GM12878 (cell line): ENCODE measurements at regions of chr5 and their contacts with region 1.

Region 1: GRCh38 chr5:23139338-23140171 is 286.4 kb upstream of the CDH12 start:
- DNase-seq: no peak
- ATAC-seq: peak; percentile 86
- H3K4me3 ChIP-seq: no peak overlapping the region
- H3K27ac ChIP-seq: no peak overlapping the region
- H3K4me1 ChIP-seq: no peaks in the 10 kb centered on the region
- H3K27me3 ChIP-seq: no peaks in the 10 kb centered on the region
- CTCF ChIP-seq: peak; percentile 41 to 67 (median 51); a peak in 5 of 6 replicates
- EP300 ChIP-seq: no peak
- POLR2A ChIP-seq: no peak
- RAD21 ChIP-seq: peak; percentile 44

Region 2: GRCh38 chr5:22889718-22890117 is 249.8 kb before region 1 on chr5:
- CTCF ChIA-PET with region 1: interaction called, 4 read pairs
- POLR2A ChIA-PET with region 1: no interaction called
- RAD21 ChIA-PET with region 1: no interaction called
- SMC1A ChIA-PET with region 1: interaction called, 4 read pairs
- in situ Hi-C with region 1: no loop called
- intact Hi-C with region 1: loop called (anchors 1 kb)
- DNase-seq: no peak
- ATAC-seq: peak; percentile 69
- H3K4me3 ChIP-seq: no peak overlapping the region
- H3K27ac ChIP-seq: no peak overlapping the region
- H3K4me1 ChIP-seq: no peaks in the 10 kb centered on the region
- H3K27me3 ChIP-seq: no peaks in the 10 kb centered on the region
- CTCF ChIP-seq: peak in 2 of 3 experiments; percentile 9 to 50; a peak in 1 of 6 replicates
- EP300 ChIP-seq: no peak
- POLR2A ChIP-seq: no peak
- RAD21 ChIP-seq: 0 out of 2 replicates have a peak, but pooled peaks have one; percentile 15

Region 3: DNA sequence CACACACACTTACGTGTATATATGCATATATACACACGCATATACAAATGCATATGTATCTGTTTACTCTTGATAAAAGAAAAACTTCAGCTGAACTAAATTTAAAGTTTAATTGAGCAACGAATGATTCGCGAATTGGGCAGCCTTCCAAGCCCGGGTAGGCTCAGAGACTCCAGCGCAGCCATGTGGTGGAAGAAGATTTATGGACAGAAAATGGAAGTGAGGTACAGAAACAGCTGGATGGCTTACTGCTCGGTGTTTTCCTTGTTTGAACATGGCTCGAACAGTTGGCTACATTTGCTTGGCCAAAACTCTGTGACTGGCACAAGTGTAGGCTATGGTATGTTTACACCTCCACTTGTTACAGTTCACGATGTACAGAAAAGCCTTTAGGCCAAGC is 128.6 kb after region 1 on chr5:
- CTCF ChIA-PET with region 1: no interaction called
- POLR2A ChIA-PET with region 1: no interaction called
- RAD21 ChIA-PET with region 1: no interaction called
- SMC1A ChIA-PET with region 1: no interaction called
- in situ Hi-C with region 1: no loop called
- intact Hi-C with region 1: no loop called
- DNase-seq: no peak
- ATAC-seq: no peak
- H3K4me3 ChIP-seq: no peak overlapping the region
- H3K27ac ChIP-seq: no peak overlapping the region
- H3K4me1 ChIP-seq: no peaks in the 10 kb centered on the region
- H3K27me3 ChIP-seq: no peaks in the 10 kb centered on the region
- CTCF ChIP-seq: no peak
- EP300 ChIP-seq: no peak
- POLR2A ChIP-seq: no peak
- RAD21 ChIP-seq: no peak